Brain microvascular endothelial cell (primary cell): ENCODE measurements at regions of chr3 and their contacts with region 1.

Region 1: DNA sequence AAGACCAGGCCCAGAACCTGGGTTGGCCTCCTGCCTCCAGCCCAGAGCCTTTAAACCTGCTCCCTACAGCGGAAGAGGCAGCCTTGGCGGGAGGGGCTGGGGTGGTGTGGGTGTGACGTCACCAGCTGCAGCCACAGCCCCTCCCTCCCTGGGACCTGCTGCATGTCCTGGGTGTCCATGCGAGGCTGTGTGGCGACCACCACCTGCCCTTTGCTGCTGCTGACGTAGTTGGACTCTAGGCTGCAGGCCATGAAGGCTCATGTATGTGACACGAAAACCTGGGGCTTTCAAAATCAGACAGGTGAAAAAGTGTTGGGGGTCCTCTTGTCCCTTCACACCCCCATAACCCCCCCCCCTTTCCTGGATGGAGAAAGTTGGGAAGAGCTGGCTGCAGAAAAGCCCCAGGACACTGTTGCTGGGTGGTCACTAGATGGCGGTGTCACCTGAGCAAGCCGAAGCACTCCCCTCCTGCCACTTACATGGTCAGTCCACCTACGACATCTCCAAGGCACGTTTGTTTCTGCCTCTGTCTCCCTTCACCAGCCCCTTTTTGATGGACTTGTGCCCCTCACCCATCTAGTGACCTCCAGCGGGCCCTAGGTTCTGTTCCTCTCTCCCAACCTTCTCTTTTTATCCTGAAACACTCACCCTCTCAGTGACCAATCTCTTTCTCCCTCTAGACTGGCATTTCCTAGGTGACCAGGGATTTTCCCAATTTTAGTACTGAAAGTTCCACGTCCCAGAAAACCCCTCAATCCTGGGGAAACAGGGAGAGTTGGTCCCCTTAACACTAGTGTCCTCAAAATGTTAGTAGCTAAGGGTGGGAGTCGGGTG is 35.2 kb downstream of the SLC6A20 start:
- DNase-seq: peak; percentile 36
- H3K4me3 ChIP-seq: no peak overlapping the region
- H3K27ac ChIP-seq: no peak overlapping the region
- H3K27me3 ChIP-seq: no peaks in the 10 kb centered on the region
- CTCF ChIP-seq: peak; percentile 93

Region 2: GRCh38 chr3:46065294-46065721 is 304.2 kb after region 1 on chr3:
- in situ Hi-C with region 1: loop called (anchors 25 kb)
- DNase-seq: no peak
- H3K4me3 ChIP-seq: no peak overlapping the region
- H3K27ac ChIP-seq: no peak overlapping the region
- H3K27me3 ChIP-seq: peaks cover 4% of the 10 kb centered on the region
- CTCF ChIP-seq: no peak